ENCODE measurements at regions of chr12 and their contacts with region 1.

Region 1: DNA sequence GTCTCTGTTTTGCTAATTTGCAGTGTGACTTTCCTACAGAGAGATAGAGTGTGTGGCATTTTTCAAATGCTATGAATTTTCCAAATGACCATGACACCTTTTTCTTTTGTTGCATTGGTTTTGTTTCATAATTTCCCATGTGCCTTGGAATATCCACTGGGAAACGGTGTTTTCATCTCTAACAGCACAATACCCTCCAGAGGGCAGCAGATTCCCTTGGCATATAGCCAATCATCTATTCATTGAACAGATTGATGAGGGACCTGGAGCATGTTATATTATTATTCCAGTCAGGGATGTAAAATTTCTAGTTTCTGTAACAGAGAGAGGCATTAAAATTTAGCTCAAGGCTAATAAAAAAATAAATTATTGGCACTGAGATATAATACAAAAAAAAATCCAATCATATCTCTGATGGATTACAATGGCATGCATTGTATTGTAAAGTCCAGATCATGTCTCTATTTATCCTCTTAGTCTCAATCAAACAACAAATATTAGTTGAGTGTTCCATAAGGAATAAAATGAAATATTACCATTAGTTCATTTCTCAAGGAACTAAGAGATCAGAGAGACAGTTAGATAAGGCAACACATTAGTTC is 29.6 kb upstream of the NTN4 start:
- DNase-seq: no peak

Region 2: DNA sequence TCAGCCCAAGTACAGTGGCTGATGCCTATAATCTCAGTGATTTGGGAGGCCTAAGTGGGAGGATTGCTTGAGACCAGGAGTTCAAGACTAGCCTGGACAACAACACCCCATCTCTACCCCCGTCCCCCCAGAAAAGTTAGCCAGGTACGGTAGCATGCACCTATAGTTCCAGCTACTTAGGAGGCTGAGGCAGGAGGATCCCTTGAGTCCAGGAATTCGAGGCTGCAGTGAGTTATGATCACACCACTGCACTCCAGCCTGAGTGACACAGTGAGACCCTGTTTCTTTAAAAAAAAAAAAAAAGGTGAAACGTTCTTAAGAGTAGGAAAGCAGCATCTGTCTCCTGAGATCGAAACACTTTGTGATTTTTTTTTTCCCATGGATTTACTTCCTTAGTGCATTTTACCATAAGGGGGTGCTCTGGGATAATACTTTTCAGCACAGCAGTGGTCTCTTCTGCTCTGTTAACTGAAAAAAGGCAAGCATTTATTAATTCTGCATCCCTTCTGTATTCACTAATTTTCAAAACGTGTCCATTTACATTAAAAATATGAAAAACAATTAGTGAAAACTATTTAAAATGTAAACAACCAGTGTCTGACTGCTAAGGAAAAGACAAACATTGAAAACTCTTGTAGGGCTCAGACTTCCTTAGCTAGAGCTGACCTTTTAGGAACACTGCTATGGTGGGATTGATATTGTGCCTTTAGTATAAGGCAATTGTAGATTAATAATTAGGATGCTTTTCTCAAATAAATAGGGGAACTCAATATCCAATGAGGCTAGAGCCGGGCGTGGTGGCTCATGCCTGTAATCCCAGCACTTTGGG is 237.8 kb before region 1 on chr12:
- intact Hi-C with region 1: loop called (anchors 2 kb)
- DNase-seq: no peak

Region 3: GRCh38 chr12:95623585-95624042 is 196.6 kb before region 1 on chr12:
- intact Hi-C with region 1: loop called (anchors 2 kb)
- DNase-seq: peak; percentile 79

Region 4: DNA sequence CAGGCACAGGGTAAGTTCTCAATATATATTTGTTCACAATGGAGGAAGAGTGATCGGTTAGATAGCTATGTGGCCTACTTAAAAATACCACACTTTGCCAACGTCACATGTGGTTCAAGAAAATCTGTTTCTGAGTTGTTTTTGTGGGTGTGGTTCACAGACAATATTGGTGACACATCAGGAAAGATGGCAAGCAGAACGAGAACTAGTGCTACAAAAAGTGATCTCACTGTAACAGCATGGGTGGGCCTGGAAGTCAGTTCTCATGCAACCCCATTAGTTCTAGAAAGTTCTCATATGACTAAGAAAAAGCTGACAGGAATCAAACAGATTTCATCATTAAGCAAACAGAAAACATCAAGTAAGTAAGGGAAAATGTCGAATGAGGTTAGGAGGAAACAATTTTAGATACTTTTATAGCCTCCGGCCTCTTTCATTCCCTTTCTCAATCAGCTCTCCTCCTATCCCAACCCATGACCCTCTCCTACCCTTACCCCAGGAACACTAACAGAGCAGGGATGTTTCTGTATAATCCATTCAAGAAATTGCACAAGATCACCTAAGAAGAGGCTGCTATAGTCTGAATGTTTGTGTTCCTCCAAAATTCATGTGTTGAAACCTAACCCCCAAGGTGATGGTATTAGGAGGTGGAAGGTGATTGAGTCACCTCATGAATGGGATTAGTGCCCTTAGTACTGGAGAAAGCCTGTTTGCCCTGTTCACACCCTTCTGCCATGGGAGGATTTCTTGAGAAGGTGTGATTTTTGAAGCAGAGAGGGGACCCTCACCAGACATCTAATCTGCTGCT is 14.1 kb before region 1 on chr12:
- intact Hi-C with region 1: no loop called
- DNase-seq: no peak

Region 5: GRCh38 chr12:95951515-95951914 is 131.3 kb after region 1 on chr12:
- intact Hi-C with region 1: no loop called
- DNase-seq: no peak

Region 6: DNA sequence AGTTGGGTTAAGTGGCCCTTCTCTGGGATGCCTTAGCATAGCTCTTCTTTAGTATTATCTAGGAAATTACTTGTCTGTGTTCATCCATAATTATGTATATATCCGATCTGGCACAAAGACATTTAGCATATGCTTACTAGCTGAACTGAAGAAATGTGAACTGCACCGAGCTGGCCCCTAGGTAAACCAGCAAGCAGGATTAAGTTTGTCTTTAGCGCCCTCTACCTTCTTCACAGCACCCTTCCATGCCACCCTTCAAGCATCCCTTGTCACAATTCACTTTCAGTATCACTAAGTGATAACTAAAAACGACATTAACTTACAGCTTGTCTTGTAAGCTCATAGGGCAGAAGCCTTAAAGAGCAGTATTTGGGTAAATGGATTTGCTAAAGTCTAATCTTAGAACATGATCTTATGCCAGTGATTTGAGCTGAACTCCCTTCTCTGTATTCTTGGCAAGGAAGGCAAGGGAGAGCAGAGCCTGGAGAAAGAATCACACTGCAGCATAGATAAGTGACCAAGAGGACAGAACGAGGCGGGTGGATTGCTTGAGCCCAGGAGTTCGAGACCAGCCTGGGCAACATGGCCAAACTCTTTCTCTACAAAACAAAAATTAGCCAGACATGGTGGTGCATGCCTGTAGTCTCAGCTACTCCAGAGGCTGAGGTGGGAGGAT is 178.5 kb after region 1 on chr12:
- intact Hi-C with region 1: loop called (anchors 10 kb)
- DNase-seq: no peak